Activated B cell treated with CpG ODN at 0.5 μM for 24 hours (primary cell): ENCODE measurements at regions of chr10 and their contacts with region 1.

Region 1: GRCh38 chr10:97676770-97677581 is 10.1 kb downstream of the AVPI1 start:
- DNase-seq: no peak
- ATAC-seq: peak; percentile 89
- H3K4me3 Mint-ChIP-seq: no peak overlapping the region
- H3K27ac Mint-ChIP-seq: peak overlapping the region; percentile 50
- H3K4me1 Mint-ChIP-seq: peaks cover 13% of the 10 kb centered on the region
- H3K27me3 Mint-ChIP-seq: no peaks in the 10 kb centered on the region
- CTCF ChIP-seq: peak; percentile 83

Region 2: GRCh38 chr10:97572214-97572989 is 104.6 kb before region 1 on chr10 and contains the start of gene ANKRD2:
- CTCF ChIA-PET with region 1: interaction called, 3 read pairs
- POLR2A ChIA-PET with region 1: no interaction called
- intact Hi-C with region 1: loop called (anchors 1 kb)
- DNase-seq: peak; percentile 30
- ATAC-seq: peak; percentile 68
- H3K4me3 Mint-ChIP-seq: no peak within 1 kb of the TSS
- H3K27ac Mint-ChIP-seq: no peak within 1 kb of the TSS
- H3K4me1 Mint-ChIP-seq: no peaks in the 10 kb centered on the region
- H3K27me3 Mint-ChIP-seq: peaks cover 4% of the 10 kb centered on the region
- CTCF ChIP-seq: no peak
- total RNA-seq, gene ANKRD2: not detected in 2 replicates

Region 3: DNA sequence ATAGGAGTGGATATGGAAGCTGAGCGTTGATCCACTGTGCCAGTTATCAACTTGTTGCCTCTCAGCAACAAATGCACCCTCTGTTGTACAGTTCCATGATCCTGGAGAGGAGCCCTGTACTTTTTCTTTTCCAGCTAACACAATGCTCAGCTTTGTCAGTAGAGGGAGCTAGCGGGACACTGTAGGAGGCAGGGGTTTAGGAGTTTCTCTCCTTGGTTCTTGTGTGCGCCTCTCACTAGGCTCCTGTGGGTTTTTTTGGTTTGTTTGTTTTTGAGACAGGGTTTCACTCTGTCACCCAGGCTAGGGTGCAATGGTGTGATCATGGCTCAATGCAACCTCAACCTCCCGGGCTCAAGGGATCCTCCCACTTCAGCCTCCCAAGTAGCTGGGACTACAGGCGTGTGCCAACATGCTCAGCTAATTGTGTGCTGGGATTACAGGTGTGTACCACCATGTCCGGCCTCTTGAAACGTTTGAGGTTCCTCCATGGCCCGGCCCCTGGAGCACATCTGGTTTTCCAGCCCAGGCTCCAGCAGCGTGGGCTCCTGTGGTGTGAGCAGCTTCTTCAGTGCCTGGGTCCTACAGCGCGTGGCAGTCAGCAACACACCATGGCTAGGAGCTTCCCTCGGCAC is 24.6 kb after region 1 on chr10:
- CTCF ChIA-PET with region 1: interaction called, 15 read pairs
- POLR2A ChIA-PET with region 1: no interaction called
- intact Hi-C with region 1: loop called (anchors 1 kb)
- DNase-seq: no peak
- ATAC-seq: peak; percentile 73
- H3K4me3 Mint-ChIP-seq: no peak overlapping the region
- H3K27ac Mint-ChIP-seq: no peak overlapping the region
- H3K4me1 Mint-ChIP-seq: no peaks in the 10 kb centered on the region
- H3K27me3 Mint-ChIP-seq: peaks cover 13% of the 10 kb centered on the region
- CTCF ChIP-seq: no peak

Region 4: GRCh38 chr10:97731346-97732051 is 54.5 kb after region 1 on chr10:
- CTCF ChIA-PET with region 1: interaction called, 86 read pairs
- POLR2A ChIA-PET with region 1: interaction called, 3 read pairs
- intact Hi-C with region 1: loop called (anchors 1 kb)
- DNase-seq: no peak
- ATAC-seq: peak; percentile 75
- H3K4me3 Mint-ChIP-seq: no peak overlapping the region
- H3K27ac Mint-ChIP-seq: no peak overlapping the region
- H3K4me1 Mint-ChIP-seq: peaks cover 5% of the 10 kb centered on the region
- H3K27me3 Mint-ChIP-seq: peaks cover 8% of the 10 kb centered on the region
- CTCF ChIP-seq: no peak

Region 5: GRCh38 chr10:97869091-97870042 is 192.4 kb after region 1 on chr10:
- CTCF ChIA-PET with region 1: no interaction called
- POLR2A ChIA-PET with region 1: no interaction called
- intact Hi-C with region 1: loop called (anchors 2 kb)
- DNase-seq: no peak
- ATAC-seq: peak; percentile 56
- H3K4me3 Mint-ChIP-seq: no peak overlapping the region
- H3K27ac Mint-ChIP-seq: no peak overlapping the region
- H3K4me1 Mint-ChIP-seq: peaks cover 6% of the 10 kb centered on the region
- H3K27me3 Mint-ChIP-seq: peaks cover 24% of the 10 kb centered on the region
- CTCF ChIP-seq: no peak

Region 6: DNA sequence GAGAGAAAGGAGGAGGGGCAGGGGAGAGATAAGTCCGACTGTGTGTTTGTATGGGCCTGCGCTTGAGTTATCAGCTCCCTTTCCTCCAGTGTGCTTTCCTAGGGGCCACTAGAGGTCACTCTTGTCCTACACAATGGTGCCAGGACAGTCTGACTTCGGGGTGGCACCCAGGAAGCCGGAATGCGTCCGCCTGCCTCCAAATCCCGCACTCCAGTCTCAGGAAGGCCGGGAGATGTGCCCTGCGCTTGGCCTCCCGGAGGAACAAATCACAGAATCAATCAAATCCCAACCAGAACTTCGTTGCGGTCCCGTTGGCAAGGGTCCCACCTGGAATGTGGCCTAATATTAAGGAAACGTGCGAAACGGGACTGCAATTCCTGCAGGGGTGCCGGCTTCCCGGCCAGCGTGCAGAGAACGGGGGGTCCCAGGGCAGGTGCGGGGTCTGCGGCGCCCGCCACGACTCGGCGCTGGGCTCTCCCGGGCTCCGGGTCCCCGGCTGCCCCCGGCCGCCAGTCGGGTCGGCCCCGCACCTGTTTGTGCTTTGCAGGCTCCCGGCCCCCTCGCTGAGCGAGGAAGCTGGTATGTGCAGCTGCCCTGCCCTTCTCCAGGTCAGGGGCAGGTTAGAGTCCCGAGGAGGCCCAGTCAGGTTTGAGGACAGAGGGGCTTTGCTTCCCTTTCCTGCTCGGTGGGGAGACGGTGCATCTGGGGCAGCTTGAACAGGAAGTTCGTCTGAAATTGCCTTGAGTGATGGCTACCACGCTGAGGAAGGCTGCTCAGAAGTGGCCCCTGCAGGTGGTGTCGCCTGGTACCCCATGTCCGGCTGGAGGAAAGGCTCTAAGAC is 790.8 kb after region 1 on chr10:
- CTCF ChIA-PET with region 1: no interaction called
- POLR2A ChIA-PET with region 1: no interaction called
- intact Hi-C with region 1: no loop called
- DNase-seq: peak; percentile 53
- ATAC-seq: peak; percentile 96
- H3K4me3 Mint-ChIP-seq: peak overlapping the region; percentile 97
- H3K27ac Mint-ChIP-seq: peak overlapping the region; percentile 88
- H3K4me1 Mint-ChIP-seq: peaks cover 4% of the 10 kb centered on the region
- H3K27me3 Mint-ChIP-seq: peaks cover 8% of the 10 kb centered on the region
- CTCF ChIP-seq: no peak